ENCODE measurements at regions of chr5 and their contacts with region 1.

Region 1: DNA sequence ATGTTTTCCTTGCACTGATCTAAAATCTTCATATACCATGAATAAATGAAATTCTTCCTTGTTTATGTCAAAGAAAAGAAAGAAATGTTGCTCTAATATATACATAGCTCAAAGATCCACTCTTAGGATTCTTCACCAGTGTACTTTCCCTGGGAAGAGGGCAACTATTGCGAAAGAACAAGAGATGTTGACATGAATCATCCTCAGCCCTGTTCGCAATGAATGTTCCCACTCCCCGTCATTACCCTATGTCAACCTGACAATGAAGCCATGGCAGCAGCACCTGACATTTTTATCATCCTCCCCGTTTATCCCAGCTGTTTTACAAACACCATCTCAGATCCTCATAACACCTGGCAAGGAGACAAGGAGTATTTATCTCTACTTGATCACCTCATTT is 409.1 kb upstream of the GRIA1 start:
- DNase-seq: peak; percentile 68
- H3K4me3 ChIP-seq: no peak overlapping the region
- H3K27ac ChIP-seq: no peak overlapping the region
- H3K4me1 ChIP-seq: peaks cover 44% of the 10 kb centered on the region
- H3K27me3 ChIP-seq: no peaks in the 10 kb centered on the region
- CTCF ChIP-seq: no peak

Region 2: DNA sequence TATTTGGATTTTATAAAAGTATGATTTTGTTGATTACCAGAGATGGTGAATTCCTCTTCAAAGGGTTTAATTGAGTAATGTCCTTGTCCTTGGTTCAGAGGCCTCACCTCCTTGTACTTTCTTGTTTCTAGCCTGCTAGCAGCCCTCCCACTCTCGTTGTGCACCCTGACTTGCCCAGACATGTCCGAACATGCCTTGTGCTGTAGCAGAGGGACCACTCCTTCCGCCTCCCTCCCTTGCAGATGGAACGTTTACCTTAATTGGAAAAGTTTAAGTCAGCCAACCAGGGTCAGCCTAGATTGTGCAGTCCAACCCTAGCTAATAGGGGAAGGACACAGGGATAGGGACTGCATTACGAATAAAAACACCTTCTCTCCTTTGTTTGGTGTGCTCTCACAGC is 269.4 kb before region 1 on chr5:
- CTCF ChIA-PET with region 1: no interaction called
- dilution Hi-C with region 1: no loop called
- in situ Hi-C with region 1: no loop called
- intact Hi-C with region 1: no loop called
- DNase-seq: peak; percentile 35
- H3K4me3 ChIP-seq: no peak overlapping the region
- H3K27ac ChIP-seq: no peak overlapping the region
- H3K4me1 ChIP-seq: no peaks in the 10 kb centered on the region
- H3K27me3 ChIP-seq: no peaks in the 10 kb centered on the region
- CTCF ChIP-seq: no peak

Region 3: DNA sequence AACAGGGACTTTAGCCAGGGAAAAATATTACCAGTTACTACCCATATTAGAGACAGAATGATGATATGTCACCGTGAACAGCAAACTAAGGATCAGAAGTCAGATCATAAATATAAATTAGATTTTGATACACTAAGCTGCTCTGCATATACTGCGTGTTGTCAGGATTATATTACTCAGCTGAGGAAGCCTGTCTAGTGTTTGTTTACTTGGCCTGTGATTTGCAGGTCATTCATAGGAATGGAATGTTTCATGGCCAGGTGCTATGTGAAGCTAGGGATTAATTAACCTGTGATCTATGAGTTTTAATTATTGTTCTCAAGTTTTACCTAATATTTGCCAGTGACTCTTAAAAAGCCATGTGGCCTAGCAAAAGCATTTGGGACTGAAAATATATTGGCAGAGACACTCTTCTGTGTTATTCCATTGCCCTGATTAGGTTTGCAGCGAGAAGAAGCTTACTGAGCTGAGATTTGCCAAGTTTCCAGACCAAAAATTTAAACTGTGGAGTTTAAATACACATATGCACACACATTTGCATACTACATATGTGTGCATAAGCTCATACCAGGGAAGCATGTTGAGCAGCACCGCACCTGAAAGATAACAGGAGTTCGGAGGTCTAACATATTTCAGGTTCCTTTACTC is 87.2 kb before region 1 on chr5:
- CTCF ChIA-PET with region 1: no interaction called
- dilution Hi-C with region 1: no loop called
- in situ Hi-C with region 1: no loop called
- intact Hi-C with region 1: loop called (anchors 5 kb)
- DNase-seq: peak; percentile 26
- H3K4me3 ChIP-seq: no peak overlapping the region
- H3K27ac ChIP-seq: no peak overlapping the region
- H3K4me1 ChIP-seq: peaks cover 4% of the 10 kb centered on the region
- H3K27me3 ChIP-seq: no peaks in the 10 kb centered on the region
- CTCF ChIP-seq: no peak

Region 4: DNA sequence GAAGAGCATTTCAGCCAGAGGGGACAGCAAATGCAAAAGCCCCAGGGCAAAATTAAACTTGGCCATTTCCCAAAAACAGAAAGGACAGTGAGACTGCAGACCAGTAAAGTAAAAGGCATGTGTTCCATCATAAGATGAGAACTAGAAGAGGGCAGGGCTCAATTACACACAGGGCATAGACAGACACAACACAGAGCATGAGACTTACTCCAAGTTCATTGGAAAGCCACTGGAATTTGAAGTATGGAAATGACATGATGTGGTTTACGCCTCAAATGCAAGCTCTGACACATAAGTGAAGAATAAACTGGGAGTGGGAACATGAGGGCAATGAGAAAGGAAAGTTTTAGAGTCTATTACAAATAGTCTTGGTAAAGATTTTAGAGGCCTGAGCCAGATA is 37.5 kb before region 1 on chr5:
- CTCF ChIA-PET with region 1: no interaction called
- dilution Hi-C with region 1: no loop called
- in situ Hi-C with region 1: no loop called
- intact Hi-C with region 1: loop called (anchors 2 kb)
- DNase-seq: peak; percentile 90
- H3K4me3 ChIP-seq: no peak overlapping the region
- H3K27ac ChIP-seq: peak overlapping the region; percentile 72
- H3K4me1 ChIP-seq: peaks cover 17% of the 10 kb centered on the region
- H3K27me3 ChIP-seq: no peaks in the 10 kb centered on the region
- CTCF ChIP-seq: no peak

Region 5: GRCh38 chr5:153308282-153308681 is 226.9 kb after region 1 on chr5:
- CTCF ChIA-PET with region 1: no interaction called
- dilution Hi-C with region 1: no loop called
- in situ Hi-C with region 1: no loop called
- intact Hi-C with region 1: no loop called
- DNase-seq: no peak
- H3K4me3 ChIP-seq: no peak overlapping the region
- H3K27ac ChIP-seq: no peak overlapping the region
- H3K4me1 ChIP-seq: peaks cover 12% of the 10 kb centered on the region
- H3K27me3 ChIP-seq: no peaks in the 10 kb centered on the region
- CTCF ChIP-seq: no peak

Measured in mammary epithelial cell (primary cell).